ENCODE measurements at regions of chr10 and their contacts with region 1.

Region 1: GRCh38 chr10:90969947-90970684 is 49.2 kb upstream of the ANKRD1 start:
- DNase-seq: peak in 1 of 3 donors; percentile 28
- H3K4me3 ChIP-seq: no peak overlapping the region
- H3K27ac ChIP-seq: no peak overlapping the region
- H3K4me1 ChIP-seq: no peaks in the 10 kb centered on the region
- H3K27me3 ChIP-seq: no peaks in the 10 kb centered on the region

Region 2: DNA sequence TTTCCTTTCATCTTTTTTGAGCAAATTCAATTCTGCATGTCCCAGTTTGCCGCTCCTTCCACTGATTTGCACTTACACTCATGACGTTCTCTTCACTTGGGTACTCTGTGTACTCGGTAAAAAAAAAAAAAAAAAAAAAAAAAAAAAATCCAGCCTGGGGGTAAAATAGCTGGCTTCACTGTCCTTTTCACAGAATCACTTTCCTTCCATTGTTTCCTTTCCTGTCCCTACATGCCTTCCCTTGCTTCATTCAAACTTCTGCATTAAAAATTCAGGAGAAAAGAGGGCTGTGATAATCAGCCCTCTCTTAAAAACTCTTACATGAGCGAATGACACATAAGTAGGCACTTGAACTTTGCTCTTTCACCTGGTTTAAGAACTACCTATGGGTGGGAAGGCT is 57.9 kb before region 1 on chr10:
- CTCF ChIA-PET with region 1: interaction called, 19 read pairs
- POLR2A ChIA-PET with region 1: no interaction called
- DNase-seq: no peak
- H3K4me3 ChIP-seq: no peak overlapping the region
- H3K27ac ChIP-seq: no peak overlapping the region
- H3K4me1 ChIP-seq: no peaks in the 10 kb centered on the region
- H3K27me3 ChIP-seq: peaks cover 0 to 3% (median 0%) of the 10 kb centered on the region in 5 experiments